ENCODE measurements at regions of chr15 and their contacts with region 1.

Region 1: GRCh38 chr15:50686468-50687301 is at the start of gene TRPM7:
- DNase-seq: peak; percentile 97
- H3K4me3 Mint-ChIP-seq: peak within 1 kb of the TSS; percentile 99
- H3K27ac Mint-ChIP-seq: peak within 1 kb of the TSS; percentile 99
- H3K4me1 Mint-ChIP-seq: peaks cover 41% of the 10 kb centered on the region
- H3K27me3 Mint-ChIP-seq: no peaks in the 10 kb centered on the region
- total RNA-seq, gene TRPM7: 39.4 and 41.5 TPM in 2 replicates

Region 2: DNA sequence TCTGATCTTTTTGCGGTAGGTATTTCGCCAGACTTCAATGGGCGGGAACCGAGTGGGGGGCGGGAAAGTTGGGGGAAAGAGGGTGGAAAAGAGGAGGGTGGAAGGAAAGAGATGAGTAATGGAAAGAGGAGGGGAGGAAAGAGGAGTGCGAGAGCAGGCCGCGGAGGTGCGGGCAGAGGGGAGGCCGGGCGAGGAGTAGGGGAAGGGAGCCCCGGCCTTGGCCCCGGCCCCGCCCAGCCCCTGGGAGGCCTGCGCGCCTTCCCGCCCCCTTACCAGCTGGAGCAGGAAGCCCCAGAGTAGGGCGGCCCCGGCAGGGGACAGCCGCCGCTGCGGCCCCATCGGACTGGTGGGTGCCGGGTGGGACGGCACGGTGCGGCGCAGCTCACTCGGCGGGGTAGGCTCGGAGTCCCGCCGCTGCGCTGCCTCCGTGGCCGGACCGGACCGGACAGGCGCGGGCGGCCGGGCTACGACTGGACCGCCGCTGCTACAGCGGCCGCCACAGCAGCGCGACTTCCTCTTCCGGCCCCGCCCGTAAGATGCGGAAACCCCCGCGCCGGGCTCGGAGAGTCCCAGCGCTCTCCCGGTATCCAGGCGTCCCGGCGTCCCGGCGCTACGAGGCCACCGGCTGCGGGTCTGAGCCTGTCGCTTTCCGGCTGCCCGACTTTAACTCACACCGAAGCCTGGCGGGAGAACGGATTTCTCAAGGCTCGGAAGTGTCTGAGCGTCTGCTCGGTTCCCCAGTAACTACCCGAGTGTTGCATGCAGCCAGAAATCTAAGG is 78.7 kb after region 1 on chr15 and contains the start of gene SPPL2A:
- intact Hi-C with region 1: loop called (anchors 1 kb)
- DNase-seq: peak; percentile 94
- H3K4me3 Mint-ChIP-seq: peak within 1 kb of the TSS; percentile 92
- H3K27ac Mint-ChIP-seq: peak within 1 kb of the TSS; percentile 97
- H3K4me1 Mint-ChIP-seq: peaks cover 54% of the 10 kb centered on the region
- H3K27me3 Mint-ChIP-seq: no peaks in the 10 kb centered on the region
- total RNA-seq, gene SPPL2A: 85.0 and 86.6 TPM in 2 replicates

Region 3: GRCh38 chr15:50813877-50814276 is 127.2 kb after region 1 on chr15:
- intact Hi-C with region 1: no loop called
- DNase-seq: no peak
- H3K4me3 Mint-ChIP-seq: no peak overlapping the region
- H3K27ac Mint-ChIP-seq: no peak overlapping the region
- H3K4me1 Mint-ChIP-seq: no peaks in the 10 kb centered on the region
- H3K27me3 Mint-ChIP-seq: peaks cover 5% of the 10 kb centered on the region

Region 4: GRCh38 chr15:50876989-50877360 is 190.3 kb after region 1 on chr15:
- intact Hi-C with region 1: loop called (anchors 2 kb)
- DNase-seq: peak; percentile 93
- H3K4me3 Mint-ChIP-seq: peak overlapping the region; percentile 81
- H3K27ac Mint-ChIP-seq: peak overlapping the region; percentile 11
- H3K4me1 Mint-ChIP-seq: peaks cover 48% of the 10 kb centered on the region
- H3K27me3 Mint-ChIP-seq: peaks cover 13% of the 10 kb centered on the region

Region 5: DNA sequence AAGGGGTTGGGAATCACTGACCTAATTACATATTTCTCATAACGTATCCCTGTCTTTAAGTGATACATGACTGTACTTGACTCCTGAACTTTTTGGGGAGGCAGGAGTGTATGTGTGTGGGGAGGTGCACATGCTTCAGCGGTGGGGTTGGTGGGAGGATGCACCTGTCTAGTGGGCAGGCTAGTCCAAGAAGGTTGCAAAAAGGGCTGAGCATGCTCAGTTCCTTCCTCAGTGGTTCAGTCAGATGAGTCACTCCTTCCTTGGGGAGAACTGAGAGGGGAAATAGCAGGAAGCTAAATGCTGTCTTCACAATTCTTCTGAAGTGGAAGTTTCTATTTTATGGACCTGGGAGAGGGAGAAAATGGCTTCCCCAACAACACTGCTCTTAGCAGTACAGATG is 197.2 kb after region 1 on chr15:
- intact Hi-C with region 1: loop called (anchors 2 kb)
- DNase-seq: peak; percentile 81
- H3K4me3 Mint-ChIP-seq: peak overlapping the region; percentile 38
- H3K27ac Mint-ChIP-seq: peak overlapping the region; percentile 83
- H3K4me1 Mint-ChIP-seq: peaks cover 55% of the 10 kb centered on the region
- H3K27me3 Mint-ChIP-seq: no peaks in the 10 kb centered on the region